ENCODE measurements at regions of chr2 and their contacts with region 1.

Region 1: GRCh38 chr2:226649871-226650660 is 149.6 kb downstream of the IRS1 start:
- DNase-seq: peak; percentile 92
- H3K4me3 ChIP-seq: no peak overlapping the region
- H3K27ac ChIP-seq: no peak overlapping the region
- H3K4me1 ChIP-seq: peaks cover 5% of the 10 kb centered on the region
- H3K27me3 ChIP-seq: peaks cover 20 to 24% of the 10 kb centered on the region in 2 experiments
- CTCF ChIP-seq: no peak
- POLR2A ChIP-seq: peak; percentile 23

Region 2: DNA sequence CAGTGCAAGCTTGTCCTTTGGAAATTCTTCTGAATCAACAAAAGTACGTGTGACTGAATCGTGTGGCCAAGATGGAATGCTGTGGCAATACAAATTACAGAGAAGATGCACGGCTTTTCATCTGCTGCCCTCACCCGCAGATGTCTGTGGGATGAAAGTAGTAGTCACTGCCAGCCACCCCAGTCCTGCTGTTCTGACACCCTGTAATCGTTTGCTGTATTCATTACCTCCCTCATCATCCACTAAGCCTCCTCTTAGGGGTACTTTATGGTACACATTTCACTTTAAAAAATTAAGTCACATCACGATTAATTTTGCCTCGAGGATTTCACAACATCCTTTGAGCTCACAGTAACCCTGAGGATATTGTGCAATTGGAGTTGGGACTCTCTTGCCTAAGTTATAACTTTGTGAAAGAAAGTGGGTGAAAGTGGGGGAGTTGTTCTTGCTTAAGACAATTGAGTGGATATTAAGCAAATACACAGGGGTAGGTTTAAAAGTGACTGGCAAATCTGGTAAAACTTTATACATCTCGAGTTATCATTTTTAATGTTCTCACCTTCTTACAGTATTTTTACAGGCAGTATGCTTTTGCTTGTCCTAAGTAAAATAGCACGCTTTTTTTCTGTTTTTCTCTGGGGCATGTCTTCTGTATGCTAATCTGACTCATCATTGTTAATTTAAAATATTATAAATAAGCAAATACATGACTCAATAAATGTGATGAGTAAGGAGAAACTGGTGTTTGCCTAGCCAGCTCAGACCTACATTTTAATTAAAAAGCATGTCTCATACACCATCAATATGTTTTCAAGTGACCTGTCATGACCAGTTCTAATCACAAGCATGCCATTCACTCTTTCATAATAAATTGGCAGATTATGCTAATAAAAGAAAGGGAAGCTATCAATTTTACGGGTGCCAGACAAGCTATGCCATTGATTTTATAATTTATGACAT is 531.3 kb before region 1 on chr2:
- CTCF ChIA-PET with region 1: no interaction called
- POLR2A ChIA-PET with region 1: no interaction called
- dilution Hi-C with region 1: no loop called
- intact Hi-C with region 1: loop called (anchors 5 kb)
- DNase-seq: no peak
- H3K4me3 ChIP-seq: no peak overlapping the region
- H3K27ac ChIP-seq: no peak overlapping the region
- H3K4me1 ChIP-seq: peaks cover 5% of the 10 kb centered on the region
- H3K27me3 ChIP-seq: no peaks in the 10 kb centered on the region
- CTCF ChIP-seq: no peak
- POLR2A ChIP-seq: no peak

Region 3: DNA sequence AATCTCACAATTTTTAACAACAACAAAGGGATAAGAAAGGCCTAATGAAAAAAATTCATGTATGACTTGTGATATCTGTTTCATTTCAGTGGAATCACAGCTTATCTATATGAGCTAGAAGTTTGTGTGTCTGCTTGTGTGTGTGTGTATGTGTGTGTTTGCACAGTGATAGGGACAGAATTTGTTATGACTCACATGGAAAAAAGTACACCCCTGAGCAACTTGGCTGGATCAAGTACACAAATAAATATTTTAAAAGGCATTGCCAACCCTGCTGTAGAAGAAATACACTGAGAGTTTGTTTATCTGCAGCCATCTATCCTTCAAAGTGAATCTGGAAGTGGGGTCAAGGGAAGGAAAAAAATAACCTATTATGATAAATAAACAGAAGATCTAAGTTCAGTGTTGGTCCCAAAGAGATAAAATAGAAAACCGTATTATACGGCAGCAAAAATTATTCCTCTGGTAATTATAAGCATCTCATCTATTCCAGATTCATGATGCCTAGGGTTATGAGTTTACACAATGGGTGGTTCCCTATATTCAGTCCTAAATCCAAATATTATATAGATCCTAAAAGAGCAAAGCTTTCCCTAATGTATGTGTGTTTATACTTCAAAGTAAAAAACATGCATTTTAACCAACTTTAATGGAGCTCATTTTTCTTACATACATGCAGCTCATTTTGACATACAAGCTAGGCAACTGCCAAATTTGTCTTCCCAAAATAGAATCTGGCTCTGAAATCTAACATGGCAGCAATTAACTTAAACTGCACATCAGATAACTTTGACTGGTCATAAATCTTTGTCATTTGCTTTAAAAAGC is 271.1 kb before region 1 on chr2:
- CTCF ChIA-PET with region 1: no interaction called
- POLR2A ChIA-PET with region 1: no interaction called
- dilution Hi-C with region 1: no loop called
- intact Hi-C with region 1: loop called (anchors 10 kb)
- DNase-seq: no peak
- H3K4me3 ChIP-seq: no peak overlapping the region
- H3K27ac ChIP-seq: no peak overlapping the region
- H3K4me1 ChIP-seq: peaks cover 8% of the 10 kb centered on the region
- H3K27me3 ChIP-seq: no peaks in the 10 kb centered on the region
- CTCF ChIP-seq: no peak
- POLR2A ChIP-seq: no peak

Region 4: GRCh38 chr2:226583715-226584114 is 66.4 kb before region 1 on chr2:
- CTCF ChIA-PET with region 1: no interaction called
- POLR2A ChIA-PET with region 1: no interaction called
- dilution Hi-C with region 1: no loop called
- intact Hi-C with region 1: loop called (anchors 5 kb)
- DNase-seq: peak; percentile 60
- H3K4me3 ChIP-seq: no peak overlapping the region
- H3K27ac ChIP-seq: no peak overlapping the region
- H3K4me1 ChIP-seq: peaks cover 5% of the 10 kb centered on the region
- H3K27me3 ChIP-seq: no peaks in the 10 kb centered on the region
- CTCF ChIP-seq: no peak
- POLR2A ChIP-seq: no peak

Region 5: DNA sequence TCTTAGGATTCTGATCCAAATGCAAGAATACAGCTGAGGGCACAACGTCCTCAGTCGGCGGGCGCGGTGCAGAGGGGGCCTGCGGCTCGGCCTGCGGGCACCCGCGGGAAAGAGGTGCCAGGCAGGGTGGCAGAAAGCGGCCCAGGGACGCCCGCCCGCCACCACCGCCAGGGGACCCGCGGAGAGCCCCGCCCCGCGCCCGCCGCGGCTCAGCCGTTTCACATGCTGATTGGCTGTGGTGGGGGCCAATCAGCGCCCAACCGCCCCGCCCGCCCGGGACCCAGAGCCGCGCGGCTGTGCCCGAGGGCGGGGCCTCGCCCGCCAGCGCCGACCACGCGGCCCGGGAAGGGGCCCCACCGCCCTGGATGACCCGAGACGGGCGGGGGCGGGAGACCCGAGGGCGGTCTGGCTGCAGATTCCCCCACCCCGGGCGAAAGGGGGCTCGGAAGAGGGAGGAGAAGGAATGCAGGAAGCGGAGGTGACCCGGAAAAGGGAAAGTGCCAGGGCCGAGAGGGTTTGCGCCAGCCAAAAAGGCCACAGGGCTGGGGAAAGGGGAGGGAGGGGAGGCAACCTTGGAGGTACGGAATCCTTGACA is 141.5 kb after region 1 on chr2:
- CTCF ChIA-PET with region 1: no interaction called
- POLR2A ChIA-PET with region 1: no interaction called
- dilution Hi-C with region 1: no loop called
- intact Hi-C with region 1: loop called (anchors 1 kb)
- DNase-seq: peak; percentile 62
- H3K4me3 ChIP-seq: peak overlapping the region; percentile 55 to 69 (median 60)
- H3K27ac ChIP-seq: peak overlapping the region; percentile 41
- H3K4me1 ChIP-seq: peaks cover 4% of the 10 kb centered on the region
- H3K27me3 ChIP-seq: peaks cover 4 to 22% of the 10 kb centered on the region in 2 experiments
- CTCF ChIP-seq: peak; percentile 25 to 27
- POLR2A ChIP-seq: no peak

Measured in endothelial cell of umbilical vein (primary cell).